ENCODE measurements at regions of chr22 and their contacts with region 1.

Region 1: DNA sequence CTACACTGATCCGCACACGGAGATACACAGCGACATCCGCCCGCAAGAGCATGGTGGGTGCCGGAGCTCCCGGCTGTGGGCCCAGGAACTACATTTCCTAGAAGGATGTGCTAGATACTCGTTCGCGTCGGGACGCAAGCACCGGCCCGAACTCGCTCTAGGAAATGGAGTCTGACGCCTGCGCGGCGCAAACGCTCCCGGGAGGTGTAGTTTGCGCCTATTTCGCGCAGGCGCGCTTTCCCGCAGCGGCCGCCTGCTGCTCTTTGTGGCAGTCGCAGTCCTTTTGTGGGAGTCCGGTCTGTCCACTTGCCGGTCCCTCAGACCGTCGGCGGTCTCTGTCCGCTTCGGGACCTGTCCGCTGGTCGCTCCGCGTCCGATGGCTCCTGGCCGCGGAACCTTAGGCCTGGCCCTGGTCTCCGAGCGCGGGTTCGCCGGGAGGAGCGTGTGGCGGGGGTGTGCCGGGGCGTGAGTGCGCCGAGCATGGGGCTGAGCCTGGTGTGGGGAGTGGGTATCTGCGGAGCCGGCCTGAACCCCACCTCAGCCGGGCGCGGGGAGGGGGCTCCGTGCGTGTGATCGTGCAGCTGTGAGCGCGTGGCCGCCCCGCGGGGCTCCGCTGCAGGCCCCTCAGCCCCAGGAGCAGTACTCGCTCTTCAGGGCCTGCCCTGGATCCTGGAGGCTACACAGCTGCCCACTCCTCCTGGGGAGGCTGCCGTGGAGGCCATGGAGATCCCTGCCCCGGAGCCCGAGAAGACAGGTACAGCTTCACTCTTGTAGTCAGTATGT is at the start of gene ZNF74:
- DNase-seq: peak; percentile 94

Region 2: GRCh38 chr22:20319745-20320658 is 74.1 kb before region 1 on chr22 and contains the start of gene DGCR6L:
- CTCF ChIA-PET with region 1: interaction called, 5 read pairs
- POLR2A ChIA-PET with region 1: interaction called, 25 read pairs
- DNase-seq: peak; percentile 95

Region 3: DNA sequence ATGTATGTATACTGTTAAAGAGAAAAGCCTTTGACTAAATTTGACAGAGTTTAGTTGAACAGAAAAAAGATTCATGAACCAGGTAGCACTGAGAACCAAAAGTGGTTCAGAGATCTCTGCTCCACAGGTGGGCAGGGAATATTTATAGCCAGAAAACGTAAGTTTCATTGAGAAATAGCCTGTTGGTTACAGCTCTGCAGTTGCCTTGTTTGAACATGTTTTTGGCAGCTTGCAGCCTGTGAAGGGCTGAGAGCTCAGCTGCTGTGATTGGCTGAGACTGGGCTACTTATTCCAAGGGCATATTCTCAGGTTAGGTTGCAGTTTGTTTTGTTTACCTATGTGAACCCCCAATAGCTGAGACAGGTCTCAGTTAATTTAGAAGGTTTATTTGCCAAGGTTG is 13.6 kb before region 1 on chr22:
- CTCF ChIA-PET with region 1: no interaction called
- POLR2A ChIA-PET with region 1: interaction called, 18 read pairs
- DNase-seq: no peak

Region 4: DNA sequence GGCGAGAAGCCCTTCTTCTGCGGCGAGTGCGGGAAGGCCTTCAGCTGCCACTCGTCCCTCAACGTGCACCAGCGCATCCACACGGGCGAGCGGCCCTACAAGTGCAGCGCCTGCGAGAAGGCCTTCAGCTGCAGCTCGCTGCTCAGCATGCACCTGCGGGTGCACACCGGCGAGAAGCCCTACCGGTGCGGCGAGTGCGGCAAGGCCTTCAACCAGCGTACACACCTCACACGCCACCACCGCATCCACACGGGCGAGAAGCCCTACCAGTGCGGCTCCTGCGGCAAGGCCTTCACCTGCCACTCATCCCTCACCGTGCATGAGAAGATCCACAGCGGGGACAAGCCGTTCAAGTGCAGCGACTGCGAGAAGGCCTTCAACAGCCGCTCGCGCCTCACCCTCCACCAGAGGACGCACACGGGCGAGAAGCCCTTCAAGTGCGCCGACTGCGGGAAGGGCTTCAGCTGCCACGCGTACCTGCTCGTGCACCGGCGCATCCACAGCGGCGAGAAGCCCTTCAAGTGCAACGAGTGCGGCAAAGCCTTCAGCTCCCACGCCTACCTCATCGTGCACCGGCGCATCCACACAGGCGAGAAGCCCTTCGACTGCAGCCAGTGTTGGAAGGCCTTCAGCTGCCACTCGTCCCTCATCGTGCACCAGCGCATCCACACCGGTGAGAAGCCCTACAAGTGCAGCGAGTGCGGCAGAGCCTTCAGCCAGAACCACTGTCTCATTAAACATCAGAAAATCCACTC is 12.0 kb after region 1 on chr22:
- CTCF ChIA-PET with region 1: interaction called, 4 read pairs
- POLR2A ChIA-PET with region 1: interaction called, 16 read pairs
- DNase-seq: no peak

Region 5: DNA sequence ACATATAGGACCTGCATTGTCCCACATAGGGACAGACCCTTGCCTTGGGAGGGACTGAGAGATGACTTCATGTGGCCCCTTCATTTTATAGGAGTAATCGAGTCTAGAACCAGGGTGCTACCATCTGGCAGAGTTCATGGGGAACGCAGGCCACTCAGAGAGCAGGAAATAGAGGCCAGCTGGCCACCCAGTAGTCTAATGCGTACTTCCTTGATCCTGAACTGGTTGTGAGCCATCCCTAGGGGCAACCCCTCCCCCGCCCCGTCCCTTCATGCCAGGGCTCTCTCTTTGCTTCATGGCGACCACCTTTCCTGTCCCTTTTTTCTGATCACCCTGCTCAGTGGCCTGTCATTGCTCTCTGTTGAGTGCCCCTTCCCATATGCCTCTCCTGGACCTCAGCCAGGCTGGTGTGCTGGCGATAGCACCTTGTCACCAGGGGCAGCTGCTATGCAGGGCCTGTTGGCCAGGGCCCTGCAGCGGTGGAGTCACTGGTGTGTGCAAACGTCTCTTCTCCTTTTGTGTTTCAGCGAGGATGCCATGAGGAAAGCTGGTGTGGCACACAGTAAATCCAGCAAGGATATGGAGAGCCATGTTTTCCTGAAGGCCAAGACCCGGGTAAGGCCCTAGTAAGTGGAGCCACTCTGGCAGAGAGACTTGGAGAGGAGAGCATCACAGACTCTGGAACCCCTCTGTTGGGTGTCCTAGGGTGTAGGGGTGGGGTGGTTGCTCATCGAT is 142.7 kb after region 1 on chr22:
- CTCF ChIA-PET with region 1: no interaction called
- POLR2A ChIA-PET with region 1: no interaction called
- DNase-seq: no peak

Region 6: DNA sequence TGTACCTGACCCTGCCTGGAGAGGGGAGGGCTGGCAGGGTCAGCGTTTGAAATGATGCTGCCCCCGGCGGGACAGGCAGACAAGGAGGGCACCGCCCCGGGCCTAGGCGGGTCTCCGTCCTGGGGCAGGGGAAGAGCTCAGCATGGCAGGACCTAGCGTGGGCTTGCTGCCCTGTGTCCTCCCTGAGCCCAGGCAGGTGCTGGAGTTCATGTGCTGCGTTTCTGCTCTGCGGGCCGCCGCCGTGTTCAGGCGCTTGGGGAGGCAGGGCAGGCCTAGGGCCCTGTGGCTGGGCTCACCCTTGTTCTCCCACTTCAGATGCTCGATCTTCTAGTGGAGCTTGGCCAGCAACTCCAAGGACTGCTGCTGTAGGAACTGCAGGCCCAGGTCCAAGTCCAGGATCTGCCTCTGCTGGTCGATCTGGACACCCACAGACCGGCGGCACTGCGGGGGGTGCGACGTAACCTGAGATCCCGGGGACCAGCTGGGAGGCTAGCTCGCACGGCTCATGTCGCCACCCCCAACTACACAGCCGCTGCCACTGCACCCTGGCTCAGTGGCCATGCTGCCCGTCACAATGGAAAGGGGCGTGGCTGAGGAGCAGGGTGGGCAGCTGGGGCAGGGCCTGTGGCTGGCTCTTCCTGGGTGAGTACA is 197.7 kb after region 1 on chr22:
- CTCF ChIA-PET with region 1: no interaction called
- POLR2A ChIA-PET with region 1: no interaction called
- DNase-seq: no peak